ENCODE measurements at regions of chr1 and their contacts with region 1.

Region 1: DNA sequence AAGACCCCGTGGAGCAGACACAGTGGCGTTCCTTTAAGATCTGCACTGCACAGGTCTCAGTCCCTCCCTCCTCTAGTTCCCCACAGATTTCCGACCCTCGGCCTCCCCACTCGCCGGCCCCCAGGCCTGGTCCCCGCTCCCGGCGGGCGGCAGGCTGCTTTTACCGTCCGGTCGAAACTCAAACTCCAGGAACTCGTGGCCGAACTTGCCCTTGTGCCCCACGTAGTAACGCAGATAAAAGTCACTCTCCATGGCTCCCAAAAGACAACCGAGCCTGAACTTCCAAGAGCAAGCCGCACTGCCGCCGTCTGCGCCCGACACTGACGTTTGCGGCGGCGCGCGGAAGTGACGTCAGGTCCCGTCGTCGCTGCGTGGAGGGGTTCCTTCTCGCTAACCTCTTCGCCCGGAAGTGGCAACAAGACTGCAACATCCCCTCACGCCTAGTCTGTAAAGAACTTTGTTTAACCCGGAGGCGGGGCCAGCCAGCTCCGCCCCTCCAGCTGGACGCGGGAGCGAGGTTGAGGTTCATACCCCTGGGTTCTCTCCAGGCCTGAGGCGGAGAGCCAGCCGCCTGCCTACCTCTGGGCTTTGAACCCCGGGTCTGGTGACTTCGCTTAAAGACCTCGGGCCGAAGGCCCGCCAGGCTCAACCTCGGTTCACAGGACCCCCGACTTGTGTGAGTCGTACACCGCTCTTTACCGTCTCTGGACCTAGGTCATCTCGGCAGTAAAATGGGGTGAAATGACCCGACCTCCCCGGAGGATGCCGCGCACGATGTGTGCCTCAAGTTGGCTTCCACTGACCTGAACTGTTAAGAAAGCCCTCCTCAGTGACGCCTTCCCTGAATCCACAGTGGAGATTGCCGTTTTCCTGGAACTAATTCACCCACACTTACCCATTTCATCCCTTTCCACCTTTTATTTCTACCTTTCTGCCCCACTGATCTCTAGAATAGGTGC is at the start of gene MAGOH:
- DNase-seq: peak; percentile 97 to 98
- ATAC-seq: peak; percentile 99
- H3K4me3 ChIP-seq: peak within 1 kb of the TSS; percentile 65
- H3K4me3 Mint-ChIP-seq: peak within 1 kb of the TSS; percentile 99
- H3K27ac ChIP-seq: peak within 1 kb of the TSS; percentile 70
- H3K27ac Mint-ChIP-seq: peak within 1 kb of the TSS; percentile 97 to 99
- H3K4me1 ChIP-seq: peaks cover 23% of the 10 kb centered on the region
- H3K4me1 Mint-ChIP-seq: peaks cover 32 to 33% of the 10 kb centered on the region in 2 donors
- H3K27me3 ChIP-seq: no peaks in the 10 kb centered on the region
- H3K27me3 Mint-ChIP-seq: no peaks in the 10 kb centered on the region
- CTCF ChIP-seq: no peak
- total RNA-seq, gene MAGOH: 48.6 to 70.4 (median 69.2) TPM

Region 2: GRCh38 chr1:53196485-53197270 is 41.8 kb before region 1 on chr1 and contains the start of gene CPT2:
- intact Hi-C with region 1: loop called (anchors 1 kb)
- DNase-seq: peak; percentile 89 to 94
- ATAC-seq: peak; percentile 97 to 99 (median 98)
- H3K4me3 ChIP-seq: peak within 1 kb of the TSS; percentile 76
- H3K4me3 Mint-ChIP-seq: peak within 1 kb of the TSS; percentile 92
- H3K27ac ChIP-seq: peak within 1 kb of the TSS; percentile 94
- H3K27ac Mint-ChIP-seq: peak within 1 kb of the TSS; percentile 94 to 95
- H3K4me1 ChIP-seq: peaks cover 19% of the 10 kb centered on the region
- H3K4me1 Mint-ChIP-seq: peaks cover 21 to 28% of the 10 kb centered on the region in 2 donors
- H3K27me3 ChIP-seq: no peaks in the 10 kb centered on the region
- H3K27me3 Mint-ChIP-seq: no peaks in the 10 kb centered on the region
- CTCF ChIP-seq: no peak
- total RNA-seq, gene CPT2: 7.6 to 11.8 (median 9.0) TPM

Region 3: GRCh38 chr1:53220171-53220961 is 18.1 kb before region 1 on chr1 and contains the start of gene CZIB:
- intact Hi-C with region 1: loop called (anchors 1 kb)
- DNase-seq: peak; percentile 92 to 96
- ATAC-seq: peak; percentile 92 to 97 (median 94)
- H3K4me3 ChIP-seq: peak within 1 kb of the TSS; percentile 97
- H3K4me3 Mint-ChIP-seq: peak within 1 kb of the TSS; percentile 91
- H3K27ac ChIP-seq: peak within 1 kb of the TSS; percentile 98
- H3K27ac Mint-ChIP-seq: peak within 1 kb of the TSS; percentile 90 to 97
- H3K4me1 ChIP-seq: peaks cover 16% of the 10 kb centered on the region
- H3K4me1 Mint-ChIP-seq: peaks cover 15 to 26% of the 10 kb centered on the region in 2 donors
- H3K27me3 ChIP-seq: no peaks in the 10 kb centered on the region
- H3K27me3 Mint-ChIP-seq: no peaks in the 10 kb centered on the region
- CTCF ChIP-seq: no peak
- total RNA-seq, gene CZIB: 39.6 to 49.7 (median 40.5) TPM

Region 4: DNA sequence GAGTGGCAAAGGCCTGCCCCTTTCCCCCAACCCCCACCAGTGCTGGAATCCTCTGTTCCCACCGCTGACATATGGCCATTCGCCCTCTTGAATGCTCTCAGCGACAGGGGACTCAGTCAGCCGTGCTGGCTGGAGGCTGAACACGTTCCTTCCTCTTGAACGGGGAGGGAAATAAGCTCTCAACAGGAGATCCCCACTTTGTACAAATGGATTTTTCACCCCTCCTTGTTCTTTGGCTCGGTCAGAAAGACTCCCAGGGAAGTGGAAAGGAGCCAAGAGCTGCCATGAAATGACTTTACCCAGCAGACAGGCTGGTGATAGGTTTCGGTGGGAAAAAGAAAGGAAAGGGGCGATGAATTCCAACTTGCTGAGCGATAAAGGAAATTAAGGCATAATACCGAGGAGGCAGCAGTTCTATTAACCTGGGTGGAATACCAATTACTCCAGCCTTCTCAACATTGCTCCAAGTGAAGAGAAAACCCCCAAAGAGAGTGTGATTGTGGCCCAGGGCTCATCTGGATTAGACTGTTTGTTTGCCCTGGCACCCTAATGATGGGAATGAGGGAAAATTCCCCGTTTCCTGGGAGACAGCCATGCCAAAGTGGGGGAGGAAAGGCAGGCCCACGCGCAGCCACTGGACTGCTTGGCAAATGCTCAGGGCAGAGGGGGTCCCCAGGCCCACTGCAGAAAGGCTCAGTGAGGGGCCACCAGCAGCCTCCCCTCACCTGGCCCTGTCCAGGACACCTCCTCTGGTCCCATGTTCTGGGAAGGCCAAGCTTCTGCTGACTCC is 65.4 kb after region 1 on chr1:
- intact Hi-C with region 1: no loop called
- DNase-seq: no peak
- ATAC-seq: no peak
- H3K4me3 ChIP-seq: no peak overlapping the region
- H3K4me3 Mint-ChIP-seq: no peak overlapping the region
- H3K27ac ChIP-seq: no peak overlapping the region
- H3K27ac Mint-ChIP-seq: no peak overlapping the region
- H3K4me1 ChIP-seq: peaks cover 4% of the 10 kb centered on the region
- H3K4me1 Mint-ChIP-seq: peaks cover 17 to 26% of the 10 kb centered on the region in 2 donors
- H3K27me3 ChIP-seq: no peaks in the 10 kb centered on the region
- H3K27me3 Mint-ChIP-seq: no peaks in the 10 kb centered on the region
- CTCF ChIP-seq: no peak

Region 5: GRCh38 chr1:53837924-53838652 is 599.6 kb after region 1 on chr1 and contains the start of gene NDC1:
- intact Hi-C with region 1: loop called (anchors 5 kb)
- DNase-seq: peak; percentile 84 to 95
- ATAC-seq: peak; percentile 89 to 96 (median 90)
- H3K4me3 ChIP-seq: peak within 1 kb of the TSS; percentile 83
- H3K4me3 Mint-ChIP-seq: peak within 1 kb of the TSS; percentile 98
- H3K27ac ChIP-seq: peak within 1 kb of the TSS; percentile 97
- H3K27ac Mint-ChIP-seq: peak within 1 kb of the TSS; percentile 95 to 98
- H3K4me1 ChIP-seq: peaks cover 7% of the 10 kb centered on the region
- H3K4me1 Mint-ChIP-seq: peaks cover 19 to 23% of the 10 kb centered on the region in 2 donors
- H3K27me3 ChIP-seq: no peaks in the 10 kb centered on the region
- H3K27me3 Mint-ChIP-seq: no peaks in the 10 kb centered on the region
- CTCF ChIP-seq: no peak
- total RNA-seq, gene NDC1: 4.3 to 6.3 (median 5.2) TPM